Ovary (tissue), 10 donors: ENCODE measurements at regions of chr15 and their contacts with region 1.

Region 1: GRCh38 chr15:38283010-38283409 is 30.4 kb downstream of the SPRED1 start:
- DNase-seq: no peak
- H3K4me3 ChIP-seq: no peak overlapping the region
- H3K27ac ChIP-seq: no peak overlapping the region
- H3K4me1 ChIP-seq: no peaks in the 10 kb centered on the region
- H3K27me3 ChIP-seq: no peaks in the 10 kb centered on the region
- CTCF ChIP-seq: no peak
- EP300 ChIP-seq: no peak
- POLR2A ChIP-seq: no peak

Region 2: GRCh38 chr15:38229705-38230310 is 53.2 kb before region 1 on chr15:
- intact Hi-C with region 1: loop called in 1 of 4 experiments (anchors 5 kb)
- DNase-seq: no peak
- H3K4me3 ChIP-seq: no peak overlapping the region
- H3K27ac ChIP-seq: no peak overlapping the region
- H3K4me1 ChIP-seq: no peaks in the 10 kb centered on the region
- H3K27me3 ChIP-seq: no peaks in the 10 kb centered on the region
- CTCF ChIP-seq: no peak
- EP300 ChIP-seq: no peak
- POLR2A ChIP-seq: no peak

Region 3: DNA sequence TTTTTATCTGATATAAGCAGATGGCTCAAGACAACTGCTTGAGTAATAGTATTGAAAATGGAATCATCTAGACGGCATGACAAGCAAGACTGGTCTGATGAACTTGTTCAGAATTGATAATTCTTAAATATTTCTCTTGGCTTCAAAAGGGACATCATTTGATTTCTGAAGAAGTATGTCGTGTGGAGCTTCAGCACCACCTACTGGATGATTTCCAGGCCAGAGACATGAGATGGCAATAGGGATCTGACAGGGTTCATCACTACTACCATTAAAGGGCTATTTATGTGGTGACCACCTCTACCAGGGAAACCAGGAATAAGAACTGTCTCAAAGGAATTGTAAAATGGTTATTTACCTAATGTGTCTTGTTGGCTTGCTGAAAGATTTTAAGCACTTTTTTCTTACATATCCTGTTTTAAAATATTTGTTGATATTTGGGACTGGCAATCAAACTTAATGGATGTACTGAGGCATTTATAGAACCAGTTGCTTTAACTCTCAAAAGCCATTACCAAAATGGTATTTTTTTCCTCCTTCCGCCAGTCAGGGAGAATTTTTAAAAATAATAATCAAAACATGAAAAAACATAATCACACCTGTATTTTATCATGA is 71.4 kb after region 1 on chr15:
- intact Hi-C with region 1: no loop called
- DNase-seq: peak; percentile 30 to 66 (median 46)
- H3K4me3 ChIP-seq: no peak overlapping the region
- H3K27ac ChIP-seq: no peak overlapping the region
- H3K4me1 ChIP-seq: no peaks in the 10 kb centered on the region
- H3K27me3 ChIP-seq: no peaks in the 10 kb centered on the region
- CTCF ChIP-seq: peak; percentile 30 to 66 (median 50)
- EP300 ChIP-seq: no peak
- POLR2A ChIP-seq: no peak

Region 4: DNA sequence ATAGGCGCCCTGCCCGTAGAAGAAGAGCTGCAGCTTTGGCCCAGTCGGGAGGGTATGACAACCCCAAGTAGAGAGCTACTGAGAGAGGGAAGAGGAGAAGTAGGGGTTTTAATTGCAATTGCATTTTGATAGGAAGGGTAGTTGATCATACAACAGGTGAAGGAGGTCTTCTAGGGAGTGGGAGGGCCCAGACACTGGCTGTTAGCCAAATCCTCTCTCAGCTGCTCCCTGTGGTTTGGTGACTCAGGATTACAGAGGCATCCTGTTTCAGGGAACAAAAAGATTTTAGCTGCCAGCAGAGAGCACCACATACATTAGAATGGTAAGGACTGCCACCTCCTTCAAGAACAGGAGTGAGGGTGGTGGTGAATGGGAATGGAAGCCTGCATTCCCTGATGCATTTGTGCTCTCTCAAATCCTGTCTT is 888.9 kb after region 1 on chr15:
- intact Hi-C with region 1: no loop called
- DNase-seq: peak; percentile 56 to 78 (median 67)
- H3K4me3 ChIP-seq: no peak overlapping the region
- H3K27ac ChIP-seq: peak overlapping the region in 1 of 2 donors; percentile 27
- H3K4me1 ChIP-seq: peaks cover 11% of the 10 kb centered on the region
- H3K27me3 ChIP-seq: no peaks in the 10 kb centered on the region
- CTCF ChIP-seq: peak in 2 of 3 donors; percentile 32 to 40
- EP300 ChIP-seq: no peak
- POLR2A ChIP-seq: no peak